T-cell (primary cell): ENCODE measurements at regions of chr10 and their contacts with region 1.

Region 1: GRCh38 chr10:32459051-32459698 is 13.2 kb downstream of the CCDC7 start:
- DNase-seq: peak in 34 of 35 experiments; percentile 14 to 85 (median 54)
- ATAC-seq: peak; percentile 99 to 100 (median 100)
- H3K4me3 ChIP-seq: no peak overlapping the region
- H3K4me3 Mint-ChIP-seq: peak overlapping the region in 2 of 3 donors; percentile 49 to 56
- H3K27ac ChIP-seq: peak overlapping the region; percentile 48
- H3K27ac Mint-ChIP-seq: peak overlapping the region; percentile 85 to 87
- H3K4me1 ChIP-seq: peaks cover 12 to 38% of the 10 kb centered on the region in 2 experiments
- H3K4me1 Mint-ChIP-seq: peaks cover 41 to 51% (median 42%) of the 10 kb centered on the region in 3 donors
- H3K27me3 ChIP-seq: no peaks in the 10 kb centered on the region
- H3K27me3 Mint-ChIP-seq: no peaks in the 10 kb centered on the region

Region 2: GRCh38 chr10:32437334-32437733 is 21.8 kb before region 1 on chr10:
- CTCF ChIA-PET with region 1: interaction called, 3 to 10 read pairs
- POLR2A ChIA-PET with region 1: interaction called, 3 to 4 read pairs
- DNase-seq: no peak
- ATAC-seq: no peak
- H3K4me3 ChIP-seq: no peak overlapping the region
- H3K4me3 Mint-ChIP-seq: no peak overlapping the region
- H3K27ac ChIP-seq: no peak overlapping the region
- H3K27ac Mint-ChIP-seq: no peak overlapping the region
- H3K4me1 ChIP-seq: peaks cover 0 to 4% of the 10 kb centered on the region in 2 experiments
- H3K4me1 Mint-ChIP-seq: peaks cover 14 to 28% (median 15%) of the 10 kb centered on the region in 3 donors
- H3K27me3 ChIP-seq: no peaks in the 10 kb centered on the region
- H3K27me3 Mint-ChIP-seq: no peaks in the 10 kb centered on the region

Region 3: GRCh38 chr10:32445740-32446535 is 13.2 kb before region 1 on chr10 and contains the start of gene CCDC7:
- CTCF ChIA-PET with region 1: interaction called, 3 to 14 read pairs
- POLR2A ChIA-PET with region 1: interaction called, 4 to 6 read pairs
- DNase-seq: peak; percentile 77 to 95 (median 85)
- ATAC-seq: peak; percentile 95 to 98 (median 98)
- H3K4me3 ChIP-seq: peak within 1 kb of the TSS; percentile 64 to 98
- H3K4me3 Mint-ChIP-seq: peak within 1 kb of the TSS; percentile 84 to 98 (median 97)
- H3K27ac ChIP-seq: peak within 1 kb of the TSS; percentile 98
- H3K27ac Mint-ChIP-seq: peak within 1 kb of the TSS; percentile 99 to 100
- H3K4me1 ChIP-seq: peaks cover 9 to 10% of the 10 kb centered on the region in 2 experiments
- H3K4me1 Mint-ChIP-seq: peaks cover 19 to 30% (median 24%) of the 10 kb centered on the region in 3 donors
- H3K27me3 ChIP-seq: no peaks in the 10 kb centered on the region
- H3K27me3 Mint-ChIP-seq: no peaks in the 10 kb centered on the region
- total RNA-seq, gene CCDC7: 48.1 to 74.6 (median 62.1) TPM